Adrenal gland (tissue), 19 donors: ENCODE measurements at regions of chr9 and their contacts with region 1.

Region 1: DNA sequence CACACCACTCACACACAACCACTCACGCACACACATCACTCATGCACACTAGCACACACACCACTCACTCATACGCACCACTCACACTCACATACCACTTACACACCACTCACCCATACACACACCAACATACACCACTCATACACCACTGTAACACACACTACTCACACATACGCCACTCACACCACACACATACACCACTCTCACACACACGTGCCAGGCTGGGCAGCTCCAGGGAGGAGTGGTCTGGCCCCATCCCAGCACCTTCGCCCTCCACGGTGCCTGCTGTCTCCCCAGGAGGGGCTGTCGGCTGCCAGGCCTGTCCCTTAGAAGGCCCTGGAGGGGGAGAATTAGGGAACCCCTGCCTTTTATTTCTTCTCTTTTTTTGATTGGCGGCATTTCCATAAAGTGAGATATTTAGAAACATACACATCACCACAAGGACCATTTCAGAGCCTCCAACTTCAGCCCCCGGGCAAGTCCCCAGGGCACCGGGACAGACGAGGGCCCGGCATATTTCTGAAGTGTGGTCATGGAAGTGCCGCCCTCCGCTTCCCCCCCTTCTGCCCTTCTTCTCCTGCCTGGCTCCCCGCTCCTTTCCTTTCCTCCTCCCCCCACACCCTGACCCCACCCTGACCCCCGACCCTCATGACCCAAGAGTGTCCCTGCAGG is 6.3 kb upstream of the ASB6 start:
- DNase-seq: peak in 1 of 7 donors; percentile 15
- H3K4me3 ChIP-seq: no peak overlapping the region
- H3K27ac ChIP-seq: no peak overlapping the region
- H3K4me1 ChIP-seq: no peaks in the 10 kb centered on the region
- H3K27me3 ChIP-seq: no peaks in the 10 kb centered on the region
- CTCF ChIP-seq: no peak
- POLR2A ChIP-seq: no peak

Region 2: GRCh38 chr9:129720181-129720864 is 72.1 kb after region 1 on chr9:
- intact Hi-C with region 1: loop called in 1 of 2 experiments (anchors 5 kb)
- DNase-seq: no peak
- H3K4me3 ChIP-seq: no peak overlapping the region
- H3K27ac ChIP-seq: no peak overlapping the region
- H3K4me1 ChIP-seq: no peaks in the 10 kb centered on the region
- H3K27me3 ChIP-seq: no peaks in the 10 kb centered on the region
- CTCF ChIP-seq: no peak
- POLR2A ChIP-seq: no peak